ENCODE measurements at regions of chr5 and their contacts with region 1.

Region 1: GRCh38 chr5:94192658-94193391 is 425.6 kb downstream of the KIAA0825 start:
- DNase-seq: no peak
- H3K4me3 ChIP-seq: no peak overlapping the region
- H3K27ac ChIP-seq: no peak overlapping the region
- H3K4me1 ChIP-seq: peaks cover 0 to 8% (median 3%) of the 10 kb centered on the region in 4 experiments; a peak in 3 of 7 replicates
- H3K27me3 ChIP-seq: no peaks in the 10 kb centered on the region
- CTCF ChIP-seq: no peak
- EP300 ChIP-seq: no peak
- POLR2A ChIP-seq: no peak
- RAD21 ChIP-seq: peak in 1 of 2 experiments; percentile 12; a peak in 1 of 4 replicates

Region 2: DNA sequence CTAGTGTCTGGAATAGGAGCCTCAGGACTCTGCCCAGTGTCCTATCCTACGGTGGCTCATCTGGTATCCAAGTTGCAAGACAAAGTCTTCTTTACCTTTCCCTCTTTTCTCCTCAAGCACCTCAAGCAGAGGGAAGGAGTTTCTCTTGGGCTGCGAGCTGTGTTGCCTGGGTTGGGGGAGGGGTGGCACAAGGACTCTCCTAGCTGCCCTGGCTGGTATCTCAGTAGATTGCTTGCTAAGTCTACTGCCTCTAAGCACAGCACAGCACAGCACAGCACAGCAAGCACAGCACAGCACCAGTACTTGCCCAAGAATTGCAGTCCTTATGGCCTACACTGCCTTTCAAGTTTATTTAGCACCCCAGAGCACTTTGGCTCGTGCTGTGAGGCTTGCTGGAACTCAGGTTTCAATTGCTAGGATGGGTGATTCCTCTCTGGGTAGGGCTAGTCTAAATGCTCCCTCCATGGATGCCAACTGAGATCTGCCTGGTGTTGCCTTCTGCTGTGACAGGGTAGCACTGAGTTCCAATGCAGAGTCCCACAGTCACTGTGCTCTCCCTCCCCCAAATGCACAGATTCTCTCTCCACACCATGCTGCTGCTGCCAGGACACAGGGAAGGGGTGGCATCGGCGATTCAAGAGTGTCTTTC is 238.3 kb before region 1 on chr5:
- CTCF ChIA-PET with region 1: no interaction called
- POLR2A ChIA-PET with region 1: no interaction called
- DNase-seq: no peak
- H3K4me3 ChIP-seq: no peak overlapping the region
- H3K27ac ChIP-seq: no peak overlapping the region
- H3K4me1 ChIP-seq: peaks cover 0 to 6% (median 2%) of the 10 kb centered on the region in 4 experiments; a peak in 3 of 7 replicates
- H3K27me3 ChIP-seq: peaks cover 0 to 1% (median 0%) of the 10 kb centered on the region in 4 experiments; a peak in 1 of 7 replicates
- CTCF ChIP-seq: no peak
- EP300 ChIP-seq: no peak
- POLR2A ChIP-seq: no peak
- RAD21 ChIP-seq: 0 out of 4 replicates have a peak, but pooled peaks of 1 of the 2 experiments have one; percentile 5

Region 3: GRCh38 chr5:94017579-94017978 is 175.2 kb before region 1 on chr5:
- CTCF ChIA-PET with region 1: no interaction called
- POLR2A ChIA-PET with region 1: no interaction called
- DNase-seq: no peak
- H3K4me3 ChIP-seq: no peak overlapping the region
- H3K27ac ChIP-seq: no peak overlapping the region
- H3K4me1 ChIP-seq: no peaks in the 10 kb centered on the region
- H3K27me3 ChIP-seq: no peaks in the 10 kb centered on the region
- CTCF ChIP-seq: no peak
- EP300 ChIP-seq: no peak
- POLR2A ChIP-seq: no peak
- RAD21 ChIP-seq: no peak

Region 4: DNA sequence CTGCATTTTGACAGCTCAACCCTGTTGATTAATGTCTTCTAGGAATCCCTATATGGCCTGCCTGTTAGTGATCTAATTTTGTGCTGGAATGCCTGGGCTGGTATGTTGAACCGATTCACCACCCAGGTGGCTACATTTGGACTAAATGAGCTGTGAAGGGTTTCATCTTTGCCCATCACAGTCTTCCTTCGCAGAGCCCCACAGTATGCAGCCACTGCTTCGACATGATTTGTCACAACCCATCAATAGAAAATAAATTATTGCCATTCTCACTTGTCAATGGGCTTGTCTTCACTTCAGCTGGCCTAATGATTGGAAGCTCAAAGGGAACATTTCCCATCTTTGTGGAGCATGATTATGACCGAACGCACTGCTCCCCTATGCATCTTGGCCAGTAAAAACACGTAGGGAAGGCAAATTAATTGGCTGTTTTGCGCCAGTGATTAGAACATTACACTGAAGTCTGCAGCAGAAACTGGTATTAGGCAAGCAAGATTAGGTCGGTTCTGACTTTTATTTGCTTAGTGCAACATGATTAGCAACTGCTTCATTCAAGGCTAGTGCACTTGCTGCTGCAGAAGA is 17.0 kb after region 1 on chr5:
- CTCF ChIA-PET with region 1: interaction called, 10 read pairs
- POLR2A ChIA-PET with region 1: no interaction called
- DNase-seq: no peak
- H3K4me3 ChIP-seq: no peak overlapping the region
- H3K27ac ChIP-seq: no peak overlapping the region
- H3K4me1 ChIP-seq: peaks cover 0 to 3% (median 0%) of the 10 kb centered on the region in 4 experiments; a peak in 1 of 7 replicates
- H3K27me3 ChIP-seq: no peaks in the 10 kb centered on the region
- CTCF ChIP-seq: no peak
- EP300 ChIP-seq: no peak
- POLR2A ChIP-seq: no peak
- RAD21 ChIP-seq: no peak

Region 5: DNA sequence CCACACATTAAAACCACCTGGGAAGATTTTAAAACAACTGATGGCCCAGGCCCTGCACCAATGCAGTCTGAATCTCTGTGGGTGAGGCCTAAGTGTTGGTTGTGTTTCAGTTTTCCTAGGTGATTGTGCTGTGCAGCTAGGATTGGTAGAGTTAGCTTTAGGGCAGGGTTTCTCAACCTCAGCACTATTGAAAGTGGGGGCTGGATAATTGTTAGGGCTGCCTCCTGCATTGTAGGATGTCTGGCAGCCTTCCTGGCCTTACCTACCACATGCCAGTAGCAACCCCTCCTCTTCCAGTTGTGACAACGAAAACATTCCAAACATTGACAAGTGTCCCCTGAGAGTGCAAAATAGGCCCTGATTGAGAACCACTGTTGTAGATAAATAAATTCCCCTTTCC is 88.6 kb after region 1 on chr5:
- CTCF ChIA-PET with region 1: no interaction called
- POLR2A ChIA-PET with region 1: no interaction called
- DNase-seq: no peak
- H3K4me3 ChIP-seq: no peak overlapping the region
- H3K27ac ChIP-seq: peak overlapping the region; percentile 26; the same call in 1 of the 2 replicates
- H3K4me1 ChIP-seq: peaks cover 2 to 7% (median 6%) of the 10 kb centered on the region in 4 experiments; a peak in 6 of 7 replicates
- H3K27me3 ChIP-seq: no peaks in the 10 kb centered on the region
- CTCF ChIP-seq: no peak
- EP300 ChIP-seq: no peak
- POLR2A ChIP-seq: no peak
- RAD21 ChIP-seq: no peak

Region 6: DNA sequence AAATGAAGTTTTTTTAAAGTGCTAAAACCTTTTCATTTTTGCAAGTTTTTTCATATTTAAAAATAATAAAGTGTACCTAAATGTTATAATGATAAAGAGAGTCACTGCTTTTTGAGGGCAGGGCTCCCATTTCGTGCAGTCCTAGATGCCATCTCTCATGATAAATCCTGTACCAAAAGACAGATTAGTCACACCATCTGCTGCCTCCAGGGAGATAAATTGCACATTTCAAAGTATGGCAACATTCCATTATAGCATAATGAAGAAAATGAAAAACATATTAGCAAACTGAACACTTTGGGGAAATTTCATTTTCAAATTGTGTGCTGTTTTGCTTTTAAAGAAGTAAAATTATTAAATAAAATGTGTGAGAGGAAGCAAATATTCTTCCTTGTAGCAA is 168.3 kb after region 1 on chr5:
- CTCF ChIA-PET with region 1: no interaction called
- POLR2A ChIA-PET with region 1: no interaction called
- DNase-seq: no peak
- H3K4me3 ChIP-seq: peak overlapping the region; percentile 53 to 71 (median 66)
- H3K27ac ChIP-seq: no peak overlapping the region; the same call in 1 of the 2 replicates
- H3K4me1 ChIP-seq: peaks cover 2 to 24% (median 7%) of the 10 kb centered on the region in 4 experiments; a peak in 5 of 7 replicates
- H3K27me3 ChIP-seq: no peaks in the 10 kb centered on the region
- CTCF ChIP-seq: no peak
- EP300 ChIP-seq: no peak
- POLR2A ChIP-seq: no peak
- RAD21 ChIP-seq: no peak

Measured in H1 (cell line).